Activated naive CD4-positive, alpha-beta T cell treated with anti-CD3 and anti-CD28 coated beads for 36 hours (primary cell): ENCODE measurements at regions of chr2 and their contacts with region 1.

Region 1: DNA sequence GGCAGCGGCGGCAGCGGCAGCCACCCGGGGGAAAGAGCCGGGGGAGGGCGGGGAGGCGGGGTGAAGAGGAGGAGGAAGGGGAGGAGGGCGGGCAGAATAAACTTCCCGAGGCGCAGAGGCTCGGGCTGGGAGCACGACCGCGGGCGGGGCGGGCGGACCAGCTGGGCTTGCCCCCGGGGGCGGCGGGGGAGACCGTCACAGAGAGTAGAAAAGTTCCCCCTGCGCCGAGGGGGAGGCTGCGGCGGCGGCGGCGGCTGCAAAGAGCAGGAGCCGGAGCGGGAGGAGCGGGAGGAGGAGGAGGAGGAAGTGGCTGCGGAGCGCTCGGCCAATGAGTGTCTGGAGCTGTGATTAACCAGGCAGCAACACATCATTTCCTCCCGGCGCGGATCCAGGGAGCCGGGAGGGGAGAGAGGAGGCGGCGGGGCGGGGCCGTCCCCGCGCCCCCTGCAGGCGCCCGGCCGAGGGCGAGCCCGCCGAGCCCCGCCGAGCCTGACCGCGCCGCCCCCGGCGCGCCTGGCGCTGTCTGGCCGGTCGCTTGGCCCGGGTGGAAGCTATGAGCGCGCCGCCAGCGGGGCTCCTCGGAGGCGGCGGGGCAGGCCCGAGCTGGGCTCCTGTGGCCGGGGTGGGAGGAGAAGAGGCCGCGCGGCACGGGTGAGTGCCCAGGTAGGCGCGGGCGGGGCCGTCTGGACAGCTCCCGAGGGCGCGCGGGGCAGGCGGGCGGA is at the start of gene ACVR1:
- DNase-seq: peak; percentile 91
- H3K4me3 Mint-ChIP-seq: peak within 1 kb of the TSS; percentile 94
- H3K27ac Mint-ChIP-seq: peak within 1 kb of the TSS; percentile 88
- H3K4me1 Mint-ChIP-seq: peaks cover 51% of the 10 kb centered on the region
- H3K27me3 Mint-ChIP-seq: no peaks in the 10 kb centered on the region
- total RNA-seq, gene ACVR1: 19.0 to 20.8 TPM

Region 2: DNA sequence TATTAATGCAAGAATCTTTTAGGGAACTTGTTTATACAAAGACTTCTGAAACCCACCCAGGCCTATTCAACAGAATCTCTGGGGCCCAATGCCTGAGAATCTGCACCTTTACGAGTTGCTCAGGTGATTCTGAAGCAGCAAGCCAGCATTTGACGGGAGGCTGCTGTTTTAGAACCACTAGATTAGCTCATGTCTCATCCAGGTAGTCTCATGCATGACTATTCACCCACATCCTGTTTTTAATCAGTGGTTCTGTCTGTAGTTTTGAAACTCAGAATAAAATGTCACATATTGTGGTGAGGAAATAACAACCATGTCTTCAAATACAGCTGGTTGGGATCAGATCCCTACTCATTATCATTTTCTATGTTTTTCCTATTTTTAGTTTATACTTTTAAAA is 471.9 kb before region 1 on chr2:
- CTCF ChIA-PET with region 1: no interaction called
- intact Hi-C with region 1: loop called (anchors 5 kb)
- DNase-seq: peak; percentile 80
- H3K4me3 Mint-ChIP-seq: no peak overlapping the region
- H3K27ac Mint-ChIP-seq: peak overlapping the region; percentile 72
- H3K4me1 Mint-ChIP-seq: peaks cover 76% of the 10 kb centered on the region
- H3K27me3 Mint-ChIP-seq: no peaks in the 10 kb centered on the region

Region 3: DNA sequence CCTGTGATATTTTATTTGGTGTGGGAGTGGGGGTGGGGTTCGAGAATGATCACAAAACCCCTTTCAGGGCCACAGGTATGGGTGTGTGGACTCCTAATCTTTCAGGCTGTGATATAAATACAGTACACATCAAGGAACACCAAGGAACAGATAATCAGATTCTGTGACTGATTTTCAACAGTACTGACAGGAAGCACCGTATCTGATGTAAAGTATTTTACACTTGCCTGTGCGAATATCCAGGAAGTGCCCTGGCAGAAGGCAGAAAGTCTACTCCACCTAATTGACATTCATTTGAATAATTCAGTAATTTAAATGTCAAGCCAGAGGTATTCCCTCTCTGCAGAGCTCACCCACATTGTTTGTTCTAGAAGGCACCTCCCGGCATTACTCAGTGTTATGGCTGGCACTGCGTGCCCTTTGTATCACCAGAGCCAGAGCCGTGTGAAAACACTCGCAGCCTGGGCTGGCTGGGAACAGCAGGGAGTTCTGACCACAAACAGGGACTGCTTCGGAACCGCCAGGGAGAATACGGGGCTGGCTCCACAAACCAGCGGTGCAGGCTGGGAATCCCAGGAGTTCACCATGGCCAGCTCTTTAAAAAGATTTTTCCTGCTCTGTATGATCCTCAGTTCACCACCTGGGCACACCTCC is 91.9 kb before region 1 on chr2:
- CTCF ChIA-PET with region 1: no interaction called
- intact Hi-C with region 1: loop called (anchors 1 kb)
- DNase-seq: peak; percentile 47
- H3K4me3 Mint-ChIP-seq: no peak overlapping the region
- H3K27ac Mint-ChIP-seq: peak overlapping the region; percentile 62
- H3K4me1 Mint-ChIP-seq: peaks cover 38% of the 10 kb centered on the region
- H3K27me3 Mint-ChIP-seq: no peaks in the 10 kb centered on the region

Region 4: GRCh38 chr2:157838442-157839161 is 37.6 kb before region 1 on chr2:
- CTCF ChIA-PET with region 1: no interaction called
- intact Hi-C with region 1: loop called (anchors 1 kb)
- DNase-seq: peak; percentile 62
- H3K4me3 Mint-ChIP-seq: no peak overlapping the region
- H3K27ac Mint-ChIP-seq: peak overlapping the region; percentile 46
- H3K4me1 Mint-ChIP-seq: peaks cover 37% of the 10 kb centered on the region
- H3K27me3 Mint-ChIP-seq: no peaks in the 10 kb centered on the region

Region 5: DNA sequence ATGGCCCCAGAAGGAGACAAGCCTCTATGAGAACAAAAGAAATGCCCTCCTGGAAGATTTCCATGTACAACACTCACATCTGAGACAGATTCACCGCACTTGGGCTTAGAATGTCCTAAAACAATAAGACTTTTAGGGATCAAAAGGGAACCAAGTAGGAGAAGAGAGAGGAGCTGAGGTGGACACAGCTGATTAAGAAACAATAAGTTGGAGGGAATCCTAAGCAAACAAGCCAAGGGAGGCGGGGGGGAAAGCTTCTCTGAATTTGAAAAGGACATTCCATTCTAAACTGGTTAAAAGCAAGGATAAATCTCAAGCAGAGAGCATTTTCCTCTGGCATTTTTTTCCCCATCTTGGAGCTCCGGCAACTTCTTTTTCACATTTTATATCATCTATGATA is 10.0 kb before region 1 on chr2:
- CTCF ChIA-PET with region 1: interaction called, 8 read pairs
- intact Hi-C with region 1: loop called (anchors 1 kb)
- DNase-seq: no peak
- H3K4me3 Mint-ChIP-seq: no peak overlapping the region
- H3K27ac Mint-ChIP-seq: no peak overlapping the region
- H3K4me1 Mint-ChIP-seq: peaks cover 57% of the 10 kb centered on the region
- H3K27me3 Mint-ChIP-seq: no peaks in the 10 kb centered on the region

Region 6: GRCh38 chr2:157890969-157891639 is 14.9 kb after region 1 on chr2:
- CTCF ChIA-PET with region 1: interaction called, 14 read pairs
- intact Hi-C with region 1: loop called (anchors 1 kb)
- DNase-seq: no peak
- H3K4me3 Mint-ChIP-seq: no peak overlapping the region
- H3K27ac Mint-ChIP-seq: peak overlapping the region; percentile 54
- H3K4me1 Mint-ChIP-seq: peaks cover 57% of the 10 kb centered on the region
- H3K27me3 Mint-ChIP-seq: no peaks in the 10 kb centered on the region

Region 7: GRCh38 chr2:158034199-158034866 is 158.1 kb after region 1 on chr2:
- CTCF ChIA-PET with region 1: no interaction called
- intact Hi-C with region 1: no loop called
- DNase-seq: peak; percentile 37
- H3K4me3 Mint-ChIP-seq: no peak overlapping the region
- H3K27ac Mint-ChIP-seq: no peak overlapping the region
- H3K4me1 Mint-ChIP-seq: no peaks in the 10 kb centered on the region
- H3K27me3 Mint-ChIP-seq: peaks cover 6% of the 10 kb centered on the region